MCF 10A (cell line): ENCODE measurements at regions of chr3 and their contacts with region 1.

Region 1: DNA sequence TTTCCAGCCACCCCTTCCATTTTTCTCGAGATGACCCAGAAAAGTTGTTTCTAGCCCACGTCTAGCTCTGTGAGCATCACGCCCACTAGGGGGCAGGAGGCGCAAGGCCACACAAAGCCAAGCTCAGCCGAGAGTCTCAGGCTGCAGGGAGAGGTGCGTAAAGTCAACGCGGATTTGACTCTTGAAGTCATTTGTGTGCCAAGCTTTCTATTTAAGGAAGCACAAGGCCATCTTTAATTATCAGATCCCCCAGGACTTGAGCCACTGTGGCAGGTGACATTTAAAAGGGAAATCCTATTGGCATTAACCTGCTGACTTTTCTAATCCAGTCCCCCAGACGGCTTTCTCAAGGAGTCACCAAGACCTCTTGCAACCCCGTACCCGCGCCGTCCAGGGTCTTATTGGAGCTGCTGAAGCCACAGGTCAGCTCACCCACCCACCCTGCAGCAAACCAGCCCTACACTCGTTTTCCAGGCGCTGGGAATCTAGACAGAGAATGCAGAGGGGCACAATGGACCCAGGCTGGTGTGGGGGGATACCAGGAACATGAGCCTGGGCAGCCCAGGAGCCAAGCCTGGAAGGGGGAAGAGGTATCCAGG is 62.1 kb downstream of the CAPN7 start:
- DNase-seq: peak; percentile 84
- H3K4me3 Mint-ChIP-seq: no peak overlapping the region
- H3K27ac Mint-ChIP-seq: no peak overlapping the region
- H3K4me1 Mint-ChIP-seq: peaks cover 31% of the 10 kb centered on the region
- H3K27me3 Mint-ChIP-seq: no peaks in the 10 kb centered on the region
- CTCF ChIP-seq: peak; percentile 79

Region 2: GRCh38 chr3:15205934-15206661 is 62.0 kb before region 1 on chr3 and contains the start of gene CAPN7:
- CTCF ChIA-PET with region 1: interaction called, 7 read pairs
- POLR2A ChIA-PET with region 1: interaction called, 11 read pairs
- intact Hi-C with region 1: no loop called
- DNase-seq: peak; percentile 93
- H3K4me3 Mint-ChIP-seq: peak within 1 kb of the TSS; percentile 81
- H3K27ac Mint-ChIP-seq: peak within 1 kb of the TSS; percentile 91
- H3K4me1 Mint-ChIP-seq: peaks cover 13% of the 10 kb centered on the region
- H3K27me3 Mint-ChIP-seq: no peaks in the 10 kb centered on the region
- CTCF ChIP-seq: no peak
- total RNA-seq, gene CAPN7: 48.4 and 55.2 TPM in 2 replicates

Region 3: GRCh38 chr3:15284121-15284889 is 16.2 kb after region 1 on chr3:
- CTCF ChIA-PET with region 1: interaction called, 41 read pairs
- POLR2A ChIA-PET with region 1: interaction called, 19 read pairs
- intact Hi-C with region 1: no loop called
- DNase-seq: peak; percentile 57
- H3K4me3 Mint-ChIP-seq: no peak overlapping the region
- H3K27ac Mint-ChIP-seq: no peak overlapping the region
- H3K4me1 Mint-ChIP-seq: peaks cover 20% of the 10 kb centered on the region
- H3K27me3 Mint-ChIP-seq: no peaks in the 10 kb centered on the region
- CTCF ChIP-seq: no peak

Region 4: GRCh38 chr3:15325242-15325641 is 57.1 kb after region 1 on chr3:
- CTCF ChIA-PET with region 1: interaction called, 104 read pairs
- POLR2A ChIA-PET with region 1: interaction called, 74 read pairs
- intact Hi-C with region 1: no loop called
- DNase-seq: no peak
- H3K4me3 Mint-ChIP-seq: no peak overlapping the region
- H3K27ac Mint-ChIP-seq: no peak overlapping the region
- H3K4me1 Mint-ChIP-seq: peaks cover 13% of the 10 kb centered on the region
- H3K27me3 Mint-ChIP-seq: no peaks in the 10 kb centered on the region
- CTCF ChIP-seq: no peak

Region 5: DNA sequence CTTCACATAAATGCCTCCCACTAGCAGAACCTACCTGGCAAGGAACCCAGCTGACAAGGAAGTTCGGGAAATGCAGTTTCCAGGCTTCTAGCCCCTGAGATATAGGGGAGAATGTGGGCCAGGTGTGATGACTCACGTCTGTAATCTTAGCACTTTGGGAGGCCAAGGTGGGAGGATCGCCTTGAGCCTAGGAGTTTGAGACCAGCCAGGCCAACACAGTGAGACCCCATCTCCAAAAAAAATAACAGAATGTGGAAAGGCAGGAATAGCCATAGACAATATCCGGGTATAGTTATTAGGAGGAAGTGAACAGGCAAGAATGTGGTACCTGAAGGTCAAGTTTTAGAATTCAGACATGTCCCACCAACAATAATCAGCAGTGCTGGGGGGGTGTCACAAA is 104.8 kb after region 1 on chr3:
- CTCF ChIA-PET with region 1: interaction called, 183 read pairs
- POLR2A ChIA-PET with region 1: interaction called, 17 read pairs
- intact Hi-C with region 1: loop called (anchors 1 kb)
- DNase-seq: no peak
- H3K4me3 Mint-ChIP-seq: no peak overlapping the region
- H3K27ac Mint-ChIP-seq: no peak overlapping the region
- H3K4me1 Mint-ChIP-seq: no peaks in the 10 kb centered on the region
- H3K27me3 Mint-ChIP-seq: no peaks in the 10 kb centered on the region
- CTCF ChIP-seq: no peak

Region 6: DNA sequence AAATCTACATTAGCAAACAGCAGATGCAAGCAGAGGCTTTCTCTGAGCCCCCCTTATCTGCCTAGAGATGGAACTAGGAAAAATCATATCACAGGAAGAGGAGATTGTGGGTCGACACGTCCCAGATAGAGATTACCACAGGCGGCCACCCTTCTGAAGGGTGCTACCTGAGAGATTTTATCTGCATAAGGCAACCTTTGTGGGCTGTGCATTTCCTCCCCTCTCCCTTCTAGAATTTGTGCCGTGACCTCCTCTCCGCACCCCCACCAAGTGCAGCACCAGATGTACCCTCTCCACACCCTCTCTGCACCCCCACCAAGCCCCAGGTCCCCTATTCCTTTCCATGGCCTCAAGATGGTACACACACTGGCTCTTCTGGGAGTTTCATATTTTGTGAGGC is 131.8 kb after region 1 on chr3:
- CTCF ChIA-PET with region 1: interaction called, 107 read pairs
- POLR2A ChIA-PET with region 1: interaction called, 14 read pairs
- intact Hi-C with region 1: loop called (anchors 1 kb)
- DNase-seq: no peak
- H3K4me3 Mint-ChIP-seq: no peak overlapping the region
- H3K27ac Mint-ChIP-seq: no peak overlapping the region
- H3K4me1 Mint-ChIP-seq: no peaks in the 10 kb centered on the region
- H3K27me3 Mint-ChIP-seq: no peaks in the 10 kb centered on the region
- CTCF ChIP-seq: no peak